ENCODE measurements at regions of chr19 and their contacts with region 1.

Region 1: DNA sequence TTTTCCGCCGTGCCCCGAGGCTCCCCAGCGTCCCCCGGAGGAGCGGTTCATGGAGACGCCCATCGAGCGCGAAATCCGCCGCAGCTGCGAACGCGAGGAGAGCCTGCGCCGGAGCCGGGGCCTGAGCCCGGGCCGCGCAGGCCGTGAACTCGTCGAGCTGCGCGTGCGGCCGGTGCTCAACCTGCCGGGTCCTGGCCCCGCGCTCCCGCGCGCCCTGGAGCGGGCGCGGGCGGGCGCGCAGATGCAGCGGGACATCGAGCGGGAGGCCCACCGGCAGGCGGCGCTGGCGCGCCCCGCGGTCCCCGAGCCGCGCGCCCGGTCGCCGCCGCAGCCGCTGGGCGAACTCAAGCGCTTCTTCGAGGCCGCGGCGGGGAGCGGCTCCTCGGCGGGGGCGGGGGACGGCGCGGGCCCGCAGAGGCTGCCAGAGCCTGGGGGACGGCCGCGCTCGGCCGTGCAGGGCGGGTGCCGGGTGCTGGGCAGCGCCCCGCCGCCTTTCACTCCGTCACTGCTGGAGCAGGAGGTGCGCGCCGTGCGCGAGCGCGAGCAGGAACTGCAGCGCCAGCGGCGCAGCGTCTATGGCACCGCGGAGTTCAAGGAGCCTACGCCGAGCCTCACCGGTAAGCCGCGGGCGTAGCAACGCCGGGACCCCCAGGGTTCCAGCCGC is 807 bp downstream of the MISP3 start:
- DNase-seq: peak; percentile 55 to 89 (median 76)
- ATAC-seq: peak; percentile 74
- H3K4me3 ChIP-seq: peak overlapping the region; percentile 69 to 86
- H3K4me3 Mint-ChIP-seq: peak overlapping the region; percentile 90
- H3K27ac ChIP-seq: peak overlapping the region; percentile 42 to 65
- H3K27ac Mint-ChIP-seq: peak overlapping the region; percentile 90
- H3K4me1 ChIP-seq: peaks cover 30% of the 10 kb centered on the region
- H3K4me1 Mint-ChIP-seq: peaks cover 10% of the 10 kb centered on the region
- H3K27me3 ChIP-seq: peaks cover 0 to 2% of the 10 kb centered on the region in 2 experiments
- H3K27me3 Mint-ChIP-seq: no peaks in the 10 kb centered on the region
- CTCF ChIP-seq: no peak

Region 2: DNA sequence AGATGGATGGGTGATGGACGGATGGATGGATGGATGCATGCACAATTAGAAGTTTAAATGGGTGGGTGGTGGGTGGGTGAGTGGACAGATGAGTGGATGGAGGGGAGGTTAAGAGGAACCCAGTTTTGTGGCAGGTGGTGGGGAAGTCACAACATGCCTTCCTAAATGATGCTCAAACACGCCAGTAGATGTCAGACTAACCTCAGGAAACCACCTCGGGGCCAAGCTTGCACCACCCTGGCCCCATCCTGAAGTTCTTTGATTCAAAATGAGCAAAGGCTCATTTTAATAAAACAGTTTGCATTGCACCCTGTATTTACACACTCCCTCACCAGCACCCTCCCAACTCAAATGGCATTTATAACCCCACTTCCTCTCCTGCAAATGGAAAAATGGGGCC is 475.8 kb before region 1 on chr19:
- CTCF ChIA-PET with region 1: no interaction called
- POLR2A ChIA-PET with region 1: no interaction called
- intact Hi-C with region 1: loop called in 1 of 2 experiments (anchors 5 kb)
- DNase-seq: peak in 8 of 9 experiments; percentile 9 to 75 (median 34)
- ATAC-seq: peak; percentile 76
- H3K4me3 ChIP-seq: no peak overlapping the region
- H3K4me3 Mint-ChIP-seq: no peak overlapping the region
- H3K27ac ChIP-seq: no peak overlapping the region
- H3K27ac Mint-ChIP-seq: no peak overlapping the region
- H3K4me1 ChIP-seq: no peaks in the 10 kb centered on the region
- H3K4me1 Mint-ChIP-seq: no peaks in the 10 kb centered on the region
- H3K27me3 ChIP-seq: no peaks in the 10 kb centered on the region
- H3K27me3 Mint-ChIP-seq: peaks cover 24% of the 10 kb centered on the region
- CTCF ChIP-seq: peak; percentile 44

Region 3: DNA sequence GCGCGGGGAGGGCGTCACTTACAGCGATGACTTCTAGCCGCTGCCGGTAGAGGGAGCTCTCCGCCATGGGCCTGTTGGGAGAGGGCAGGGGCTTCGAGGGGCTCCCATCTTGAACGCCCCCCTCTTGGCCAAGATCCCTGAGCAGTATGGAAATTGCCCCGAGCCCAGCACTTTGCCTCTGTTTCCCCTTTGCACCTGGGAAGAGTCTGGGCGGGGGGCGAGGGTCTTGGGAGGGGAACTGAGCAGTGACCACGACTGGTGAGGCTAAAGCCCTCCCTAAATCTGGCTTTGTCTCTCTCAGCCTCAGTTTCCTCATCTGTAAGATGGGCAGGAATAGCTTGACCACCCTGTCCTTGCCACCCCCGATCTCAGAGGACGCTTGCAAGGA is 14.3 kb before region 1 on chr19:
- CTCF ChIA-PET with region 1: interaction called, 35 read pairs
- POLR2A ChIA-PET with region 1: interaction called, 3 read pairs
- intact Hi-C with region 1: no loop called
- DNase-seq: peak in 8 of 9 experiments; percentile 22 to 72 (median 58)
- ATAC-seq: peak; percentile 65
- H3K4me3 ChIP-seq: no peak overlapping the region
- H3K4me3 Mint-ChIP-seq: no peak overlapping the region
- H3K27ac ChIP-seq: no peak overlapping the region
- H3K27ac Mint-ChIP-seq: no peak overlapping the region
- H3K4me1 ChIP-seq: peaks cover 15% of the 10 kb centered on the region
- H3K4me1 Mint-ChIP-seq: peaks cover 18% of the 10 kb centered on the region
- H3K27me3 ChIP-seq: peaks cover 20% of the 10 kb centered on the region in 2 experiments
- H3K27me3 Mint-ChIP-seq: peaks cover 38% of the 10 kb centered on the region
- CTCF ChIP-seq: peak; percentile 72

Region 4: DNA sequence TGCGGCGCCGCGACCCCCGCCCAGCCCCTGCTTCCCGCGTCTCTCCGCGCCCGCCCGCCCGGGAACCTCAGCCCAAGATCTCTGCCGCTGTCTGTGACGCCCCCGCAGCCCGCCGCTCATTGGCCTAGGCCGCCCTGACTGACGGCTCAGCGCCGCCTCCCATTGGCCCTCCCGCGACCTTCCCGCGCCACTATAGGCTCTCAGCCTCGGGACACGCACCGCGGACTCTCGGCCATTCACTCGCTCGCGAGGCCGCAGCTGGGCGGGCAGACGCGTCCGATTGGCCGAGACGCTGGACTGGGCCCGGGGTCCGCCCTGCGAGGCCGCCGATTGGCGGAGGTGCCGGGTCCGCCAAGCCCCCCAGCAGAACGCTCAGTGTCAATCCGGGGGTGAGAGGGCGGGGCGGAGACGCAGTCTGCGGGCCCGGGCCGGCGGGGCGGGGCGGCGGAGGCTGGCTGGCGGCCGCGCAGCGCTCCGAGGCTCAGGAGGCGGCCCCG is 44.3 kb after region 1 on chr19 and contains the start of gene PRKACA:
- CTCF ChIA-PET with region 1: interaction called, 12 read pairs
- POLR2A ChIA-PET with region 1: interaction called, 3 read pairs
- intact Hi-C with region 1: loop called in 1 of 2 experiments (anchors 1 kb)
- DNase-seq: peak; percentile 95 to 99 (median 98)
- ATAC-seq: peak; percentile 90
- H3K4me3 ChIP-seq: peak within 1 kb of the TSS; percentile 67 to 72
- H3K4me3 Mint-ChIP-seq: peak within 1 kb of the TSS; percentile 94
- H3K27ac ChIP-seq: peak within 1 kb of the TSS; percentile 52 to 86
- H3K27ac Mint-ChIP-seq: peak within 1 kb of the TSS; percentile 99
- H3K4me1 ChIP-seq: peaks cover 42% of the 10 kb centered on the region
- H3K4me1 Mint-ChIP-seq: peaks cover 41% of the 10 kb centered on the region
- H3K27me3 ChIP-seq: no peaks in the 10 kb centered on the region
- H3K27me3 Mint-ChIP-seq: no peaks in the 10 kb centered on the region
- CTCF ChIP-seq: no peak
- total RNA-seq, gene PRKACA: 37.0 to 40.8 TPM